HCT116 (cell line): ENCODE measurements at regions of chr2 and their contacts with region 1.

Region 1: GRCh38 chr2:70806013-70806412 is 14.4 kb downstream of the CLEC4F start:
- DNase-seq: no peak
- ATAC-seq: no peak
- H3K4me3 ChIP-seq: no peak overlapping the region
- H3K27ac ChIP-seq: no peak overlapping the region
- H3K4me1 ChIP-seq: no peaks in the 10 kb centered on the region
- H3K27me3 ChIP-seq: no peaks in the 10 kb centered on the region
- CTCF ChIP-seq: no peak
- POLR2A ChIP-seq: no peak
- RAD21 ChIP-seq: no peak

Region 2: DNA sequence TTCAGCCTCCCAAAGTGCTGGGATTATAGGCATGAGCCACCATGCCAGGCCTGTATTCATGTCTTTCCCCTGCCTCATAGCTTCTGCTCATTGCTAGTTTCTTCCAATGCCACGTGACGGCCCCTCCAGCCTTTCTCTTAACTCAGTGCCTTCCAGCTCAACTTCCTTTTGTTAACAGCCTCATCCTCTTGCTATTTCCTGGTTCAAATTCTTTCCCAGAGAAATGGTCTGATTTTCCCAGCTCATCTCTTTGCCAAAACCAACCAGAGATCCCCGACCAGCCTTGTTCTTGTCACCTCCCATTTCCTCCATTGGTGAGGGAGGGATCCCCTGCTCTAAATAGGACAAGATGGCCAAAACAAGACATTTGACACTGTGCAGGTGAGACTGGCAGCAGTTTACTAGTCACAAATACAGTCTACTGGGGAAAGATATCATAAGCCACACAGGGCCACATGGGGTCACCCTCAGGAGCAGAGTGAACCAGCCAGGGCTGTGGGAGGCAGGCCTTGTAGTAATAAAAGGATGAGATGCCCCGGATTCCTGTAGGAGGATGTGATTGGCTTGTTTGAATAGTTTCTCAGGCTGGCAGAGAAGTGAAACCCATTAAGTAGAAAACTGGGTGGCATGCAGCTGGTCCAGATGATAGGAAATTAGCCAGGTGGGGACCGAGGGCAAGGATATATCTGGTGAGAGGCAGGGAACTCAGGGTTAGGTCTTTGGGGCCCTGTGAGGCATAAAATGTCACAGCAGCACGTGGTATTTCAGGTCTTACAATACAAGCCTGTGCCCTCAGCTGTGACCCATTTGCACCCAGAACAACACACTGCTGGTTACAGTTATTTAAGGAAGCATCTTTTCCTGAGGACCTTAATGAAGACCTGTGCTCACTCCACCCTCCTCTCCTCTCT is 23.2 kb after region 1 on chr2:
- CTCF ChIA-PET with region 1: no interaction called
- POLR2A ChIA-PET with region 1: no interaction called
- RAD21 ChIA-PET with region 1: no interaction called
- intact Hi-C with region 1: loop called (anchors 1 kb)
- DNase-seq: no peak
- ATAC-seq: no peak
- H3K4me3 ChIP-seq: no peak overlapping the region
- H3K27ac ChIP-seq: no peak overlapping the region
- H3K4me1 ChIP-seq: no peaks in the 10 kb centered on the region
- H3K27me3 ChIP-seq: no peaks in the 10 kb centered on the region
- CTCF ChIP-seq: no peak
- POLR2A ChIP-seq: no peak
- RAD21 ChIP-seq: no peak